ENCODE measurements at regions of chr15 and their contacts with region 1.

Region 1: DNA sequence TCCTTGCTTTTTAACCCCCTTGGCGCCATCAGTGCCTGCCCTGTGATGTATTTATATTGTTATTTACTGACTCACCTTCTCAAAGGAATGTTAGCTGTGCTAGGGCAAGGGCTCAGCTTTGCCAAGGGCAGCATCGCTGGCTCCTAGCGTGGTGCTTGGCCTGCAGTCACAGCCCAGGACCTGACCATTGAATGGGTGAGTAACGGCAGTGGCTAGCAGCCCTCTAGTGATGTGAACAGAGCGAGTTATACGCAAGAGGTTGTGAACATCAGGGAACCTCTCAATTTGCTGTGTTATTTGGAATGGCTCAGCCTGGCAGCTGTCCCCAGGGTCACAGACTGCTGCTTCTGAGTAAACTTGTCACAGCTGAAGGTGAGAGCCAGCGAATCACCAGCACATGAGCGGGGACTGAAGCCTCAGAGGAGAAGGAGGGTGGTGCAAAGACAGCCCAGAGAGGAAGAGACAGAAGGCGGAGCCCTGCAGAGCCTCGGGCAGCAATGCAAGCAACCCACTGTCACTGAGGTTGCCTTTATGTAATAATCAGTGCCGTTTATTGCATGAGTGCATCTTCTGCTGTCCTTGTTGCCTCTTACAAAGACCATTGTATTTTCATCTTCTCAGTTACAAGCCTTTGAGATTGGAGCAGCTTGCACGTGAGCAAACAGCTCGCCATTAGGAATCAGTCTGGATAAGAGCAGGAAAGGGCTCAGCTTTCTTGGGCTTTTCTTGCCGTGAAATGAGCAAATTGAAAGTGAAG is 158.3 kb downstream of the SLCO3A1 start:
- DNase-seq: peak; percentile 37 to 59
- H3K4me3 ChIP-seq: no peak overlapping the region
- H3K27ac ChIP-seq: peak overlapping the region; percentile 25
- H3K4me1 ChIP-seq: peaks cover 9% of the 10 kb centered on the region; the same call in 1 of the 2 replicates
- H3K27me3 ChIP-seq: no peaks in the 10 kb centered on the region
- CTCF ChIP-seq: no peak

Region 2: GRCh38 chr15:91947683-91948608 is 63.8 kb before region 1 on chr15:
- CTCF ChIA-PET with region 1: no interaction called
- POLR2A ChIA-PET with region 1: no interaction called
- intact Hi-C with region 1: loop called (anchors 5 kb)
- DNase-seq: peak; percentile 69 to 93
- H3K4me3 ChIP-seq: peak overlapping the region; percentile 39; the same call in 1 of the 2 replicates
- H3K27ac ChIP-seq: peak overlapping the region; percentile 100
- H3K4me1 ChIP-seq: peaks cover 94% of the 10 kb centered on the region
- H3K27me3 ChIP-seq: no peaks in the 10 kb centered on the region
- CTCF ChIP-seq: no peak